ENCODE measurements at regions of chr17 and their contacts with region 1.

Region 1: GRCh38 chr17:81636505-81637288 is at the starts of genes NPLOC4 and TSPAN10:
- DNase-seq: peak; percentile 96
- H3K4me3 Mint-ChIP-seq: peak within 1 kb of the TSS; percentile 97
- H3K27ac Mint-ChIP-seq: peak within 1 kb of the TSS; percentile 91
- H3K4me1 Mint-ChIP-seq: peaks cover 14% of the 10 kb centered on the region
- H3K27me3 Mint-ChIP-seq: no peaks in the 10 kb centered on the region
- total RNA-seq, gene NPLOC4: 142 and 147 TPM in 2 replicates
- total RNA-seq, gene TSPAN10: 0.14 and 0.37 TPM in 2 replicates

Region 2: GRCh38 chr17:81514739-81515529 is 121.8 kb before region 1 on chr17:
- intact Hi-C with region 1: no loop called
- DNase-seq: peak; percentile 93
- H3K4me3 Mint-ChIP-seq: peak overlapping the region; percentile 92
- H3K27ac Mint-ChIP-seq: peak overlapping the region; percentile 92
- H3K4me1 Mint-ChIP-seq: peaks cover 23% of the 10 kb centered on the region
- H3K27me3 Mint-ChIP-seq: peaks cover 2% of the 10 kb centered on the region

Region 3: GRCh38 chr17:81666342-81667191 is 29.9 kb after region 1 on chr17 and contains the starts of genes CCDC137 and OXLD1:
- intact Hi-C with region 1: loop called (anchors 1 kb)
- DNase-seq: peak; percentile 98
- H3K4me3 Mint-ChIP-seq: peak within 1 kb of the TSS; percentile 93
- H3K27ac Mint-ChIP-seq: peak within 1 kb of the TSS; percentile 97
- H3K4me1 Mint-ChIP-seq: peaks cover 33% of the 10 kb centered on the region
- H3K27me3 Mint-ChIP-seq: no peaks in the 10 kb centered on the region
- total RNA-seq, gene CCDC137: 54.7 and 60.2 TPM in 2 replicates
- total RNA-seq, gene OXLD1: 52.8 and 57.8 TPM in 2 replicates